Naive thymus-derived CD4-positive, alpha-beta T cell (primary cell): ENCODE measurements at regions of chr5 and their contacts with region 1.

Region 1: GRCh38 chr5:76473661-76474060 is 70.6 kb downstream of the IQGAP2 start:
- DNase-seq: peak; percentile 13 to 89 (median 83)
- ATAC-seq: peak; percentile 95
- H3K4me3 ChIP-seq: no peak overlapping the region
- H3K4me3 Mint-ChIP-seq: peak overlapping the region; percentile 19 to 78 (median 58)
- H3K27ac ChIP-seq: peak overlapping the region; percentile 59
- H3K27ac Mint-ChIP-seq: peak overlapping the region; percentile 72 to 98 (median 93)
- H3K4me1 ChIP-seq: peaks cover 54 to 67% of the 10 kb centered on the region in 2 donors
- H3K4me1 Mint-ChIP-seq: peaks cover 56 to 88% (median 79%) of the 10 kb centered on the region in 7 donors
- H3K27me3 ChIP-seq: no peaks in the 10 kb centered on the region
- H3K27me3 Mint-ChIP-seq: no peaks in the 10 kb centered on the region

Region 2: DNA sequence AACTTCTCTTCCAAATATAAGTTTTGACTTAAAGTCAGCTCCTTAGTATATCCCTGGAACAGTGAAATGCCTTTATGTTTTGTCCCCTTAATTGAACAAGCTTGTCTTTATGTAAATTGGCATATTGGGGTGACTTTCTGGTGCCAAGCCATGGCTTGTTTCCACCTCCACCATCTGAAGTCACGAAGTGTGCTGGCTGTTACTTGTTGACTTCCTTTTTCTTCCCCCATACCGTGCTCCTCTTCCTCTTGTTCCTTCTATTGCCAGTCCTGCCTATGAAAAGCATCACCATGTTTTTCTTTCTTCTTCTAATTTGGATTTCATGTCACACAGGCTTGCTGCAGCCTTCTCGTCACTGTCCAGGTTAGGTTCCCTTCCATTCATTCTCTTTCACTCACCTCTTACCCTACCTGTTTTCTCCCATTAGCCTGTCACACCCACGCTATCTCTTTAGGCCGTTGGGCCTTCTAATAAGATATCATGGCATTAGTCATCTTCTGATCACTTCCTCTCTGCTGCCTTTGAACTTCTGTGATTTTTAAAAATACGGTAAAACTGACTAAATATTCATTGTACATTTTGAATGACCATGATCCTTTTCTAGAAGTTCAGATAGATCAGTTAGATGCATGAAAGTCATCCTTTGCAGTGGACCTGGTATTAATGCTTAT is 22.5 kb before region 1 on chr5:
- CTCF ChIA-PET with region 1: no interaction called
- POLR2A ChIA-PET with region 1: interaction called, 4 read pairs
- intact Hi-C with region 1: loop called in 1 of 2 experiments (anchors 2 kb)
- DNase-seq: no peak
- ATAC-seq: peak; percentile 42
- H3K4me3 ChIP-seq: no peak overlapping the region
- H3K4me3 Mint-ChIP-seq: peak overlapping the region in 6 of 10 donors; percentile 2 to 60 (median 14)
- H3K27ac ChIP-seq: no peak overlapping the region
- H3K27ac Mint-ChIP-seq: peak overlapping the region in 3 of 9 donors; percentile 35 to 58 (median 49)
- H3K4me1 ChIP-seq: peaks cover 21 to 22% of the 10 kb centered on the region in 2 donors
- H3K4me1 Mint-ChIP-seq: peaks cover 31 to 64% (median 56%) of the 10 kb centered on the region in 7 donors
- H3K27me3 ChIP-seq: no peaks in the 10 kb centered on the region
- H3K27me3 Mint-ChIP-seq: no peaks in the 10 kb centered on the region